ENCODE measurements at regions of chrX and their contacts with region 1.

Region 1: DNA sequence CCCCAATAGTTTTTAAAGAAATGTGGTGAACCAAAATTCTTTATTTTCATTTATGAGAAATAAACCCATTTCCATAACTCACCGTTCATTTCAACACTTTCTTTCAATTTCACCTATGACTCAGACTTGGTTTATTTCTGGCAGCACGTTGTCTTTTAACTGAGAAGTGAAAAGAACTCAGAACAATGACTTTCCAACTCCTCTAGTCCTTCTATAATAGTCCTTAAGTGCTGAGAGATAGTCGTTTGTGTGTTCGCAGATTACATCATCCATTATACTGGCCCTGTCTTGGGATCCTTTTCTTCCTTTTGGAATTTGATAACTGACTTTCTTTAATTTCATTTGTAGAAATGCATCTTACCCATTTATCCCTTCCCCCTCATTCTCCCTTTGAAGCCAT is 113.6 kb downstream of the GLUD2 start:
- DNase-seq: no peak
- H3K4me3 Mint-ChIP-seq: peak overlapping the region; percentile 46
- H3K27ac Mint-ChIP-seq: peak overlapping the region; percentile 79
- H3K4me1 Mint-ChIP-seq: peaks cover 25% of the 10 kb centered on the region
- H3K27me3 Mint-ChIP-seq: no peaks in the 10 kb centered on the region

Region 2: GRCh38 chrX:120797188-120797851 is 363.7 kb before region 1 on chrX:
- intact Hi-C with region 1: loop called (anchors 1 kb)
- DNase-seq: no peak
- H3K4me3 Mint-ChIP-seq: peak overlapping the region; percentile 55
- H3K27ac Mint-ChIP-seq: peak overlapping the region; percentile 94
- H3K4me1 Mint-ChIP-seq: peaks cover 35% of the 10 kb centered on the region
- H3K27me3 Mint-ChIP-seq: no peaks in the 10 kb centered on the region

Region 3: GRCh38 chrX:121064579-121064978 is 96.4 kb before region 1 on chrX:
- intact Hi-C with region 1: no loop called
- DNase-seq: no peak
- H3K4me3 Mint-ChIP-seq: no peak overlapping the region
- H3K27ac Mint-ChIP-seq: no peak overlapping the region
- H3K4me1 Mint-ChIP-seq: no peaks in the 10 kb centered on the region
- H3K27me3 Mint-ChIP-seq: no peaks in the 10 kb centered on the region

Region 4: DNA sequence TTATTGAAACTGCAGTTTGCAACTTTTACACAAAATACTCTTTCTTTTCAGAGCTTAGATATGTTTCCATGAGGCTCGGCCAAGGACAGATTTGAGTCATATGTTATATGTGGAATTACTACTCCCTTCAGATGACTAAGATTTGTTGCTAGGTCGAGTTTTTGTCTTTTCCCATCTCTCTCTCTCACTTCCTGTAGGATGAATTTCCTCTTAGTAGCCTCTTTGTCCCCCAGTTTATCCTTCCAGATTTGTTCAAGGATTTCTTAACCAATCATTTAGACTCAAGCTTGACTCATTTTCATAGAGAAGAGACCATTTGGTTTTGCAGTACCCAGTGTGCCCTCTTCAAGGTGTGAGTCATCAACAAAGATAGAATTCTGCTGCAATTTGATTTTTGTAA is 95.7 kb after region 1 on chrX:
- intact Hi-C with region 1: loop called (anchors 2 kb)
- DNase-seq: no peak
- H3K4me3 Mint-ChIP-seq: no peak overlapping the region
- H3K27ac Mint-ChIP-seq: peak overlapping the region; percentile 75
- H3K4me1 Mint-ChIP-seq: peaks cover 5% of the 10 kb centered on the region
- H3K27me3 Mint-ChIP-seq: no peaks in the 10 kb centered on the region

Region 5: DNA sequence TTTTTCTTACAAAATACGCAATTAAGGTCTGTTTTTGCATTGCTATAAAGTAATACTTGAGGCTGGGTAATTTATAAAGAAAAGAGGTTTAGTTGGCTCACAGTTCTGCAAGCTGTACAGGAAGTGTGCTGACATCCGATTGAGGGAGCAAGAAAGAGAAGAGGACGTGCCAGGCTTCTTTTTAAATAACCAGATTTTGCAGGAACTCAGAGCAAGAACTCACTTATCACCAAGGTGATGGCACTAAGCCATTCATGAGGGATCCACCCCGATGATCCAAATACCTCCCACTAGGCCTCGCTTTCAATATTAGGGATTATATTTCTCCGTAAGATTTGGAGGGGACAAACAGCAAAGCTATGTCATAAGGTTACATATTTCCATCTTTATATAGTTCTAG is 343.2 kb after region 1 on chrX:
- intact Hi-C with region 1: loop called (anchors 5 kb)
- DNase-seq: peak; percentile 52
- H3K4me3 Mint-ChIP-seq: no peak overlapping the region
- H3K27ac Mint-ChIP-seq: no peak overlapping the region
- H3K4me1 Mint-ChIP-seq: no peaks in the 10 kb centered on the region
- H3K27me3 Mint-ChIP-seq: no peaks in the 10 kb centered on the region